Motor neuron (in vitro differentiated cells): ENCODE measurements at regions of chr5 and their contacts with region 1.

Region 1: GRCh38 chr5:174418928-174419796 is 305.2 kb upstream of the MSX2 start:
- ATAC-seq: peak; percentile 99
- H3K4me3 ChIP-seq: peak overlapping the region in 4 of 5 donors; percentile 11 to 18 (median 14)
- H3K27ac ChIP-seq: no peak overlapping the region
- H3K4me1 ChIP-seq: no peaks in the 10 kb centered on the region

Region 2: GRCh38 chr5:174195517-174195916 is 223.6 kb before region 1 on chr5:
- in situ Hi-C with region 1: no loop called
- ATAC-seq: no peak
- H3K4me3 ChIP-seq: no peak overlapping the region
- H3K27ac ChIP-seq: no peak overlapping the region
- H3K4me1 ChIP-seq: peaks cover 17 to 19% of the 10 kb centered on the region in 2 donors

Region 3: GRCh38 chr5:174724491-174725260 is 305.5 kb after region 1 on chr5 and contains the start of gene MSX2:
- in situ Hi-C with region 1: loop called in 3 of 9 experiments (anchors 25 kb)
- ATAC-seq: peak; percentile 89 to 94 (median 93)
- H3K4me3 ChIP-seq: peak within 1 kb of the TSS; percentile 25 to 49 (median 32)
- H3K27ac ChIP-seq: no peak within 1 kb of the TSS
- H3K4me1 ChIP-seq: peaks cover 3 to 5% of the 10 kb centered on the region in 2 donors
- total RNA-seq, gene MSX2: 0.11 to 5.1 (median 0.25) TPM in 7 of 8 experiments, not detected in the other

Region 4: DNA sequence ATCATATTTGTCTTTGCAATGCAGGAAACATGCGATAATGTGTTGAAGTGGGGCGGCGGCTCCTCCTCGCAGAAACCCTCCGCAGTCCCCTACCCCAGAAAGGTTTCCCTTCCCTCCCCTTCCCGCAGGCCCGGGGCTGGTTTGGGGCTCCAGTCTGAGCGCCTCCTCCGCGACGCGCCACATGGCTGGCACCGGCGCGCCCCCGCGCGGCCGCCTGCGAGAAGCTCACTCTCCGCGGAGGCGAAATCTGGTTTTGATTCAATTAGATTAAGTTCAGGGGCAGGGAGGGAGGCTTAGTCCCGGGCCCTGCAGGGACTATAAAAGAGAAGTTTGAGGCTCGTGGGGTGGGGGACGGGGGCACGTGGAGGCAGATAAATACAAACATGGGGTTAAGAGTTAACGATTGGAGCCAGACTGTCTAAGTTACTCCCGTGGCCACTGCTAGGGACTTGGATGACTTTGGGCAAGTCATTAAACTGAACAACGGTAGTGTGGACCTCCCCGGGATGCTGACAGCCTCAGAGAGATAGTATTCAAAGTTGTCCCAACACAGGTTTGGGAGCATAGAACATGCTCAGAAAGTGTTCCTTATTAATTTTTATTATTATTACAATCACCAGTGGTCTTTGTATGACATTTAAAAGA is 374.6 kb after region 1 on chr5:
- in situ Hi-C with region 1: loop called in 4 of 9 experiments (anchors 10 to 25 kb)
- ATAC-seq: peak; percentile 70 to 99 (median 82)
- H3K4me3 ChIP-seq: no peak overlapping the region
- H3K27ac ChIP-seq: no peak overlapping the region
- H3K4me1 ChIP-seq: no peaks in the 10 kb centered on the region

Region 5: DNA sequence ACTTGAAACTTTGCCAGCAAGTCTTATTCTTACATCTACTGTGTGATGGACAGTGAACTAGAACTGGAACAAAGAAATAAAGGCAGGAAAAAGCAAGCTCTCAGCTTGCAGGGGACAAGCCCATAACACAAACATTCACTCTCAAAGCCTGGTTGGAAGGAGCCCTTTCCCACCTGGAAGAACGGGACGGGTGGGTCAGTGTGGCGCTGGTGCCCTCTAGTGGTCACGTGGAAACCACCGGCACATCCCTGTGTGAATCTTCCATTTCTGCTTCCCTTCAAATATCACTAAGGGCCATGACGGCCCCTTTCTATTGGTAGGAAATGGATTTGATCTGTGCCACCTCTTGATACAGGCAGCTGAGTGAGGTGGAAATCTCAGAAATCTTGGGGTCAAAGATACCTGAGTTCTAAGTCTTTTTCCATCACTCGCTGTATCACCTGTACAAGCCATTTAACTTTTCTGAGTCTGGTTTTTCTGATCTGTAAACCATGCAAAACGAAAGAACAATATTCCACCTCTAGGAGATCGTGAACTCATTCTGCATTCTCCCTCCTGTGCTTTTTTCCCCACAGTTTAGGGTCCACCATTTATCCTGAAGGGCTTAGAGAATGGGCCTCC is 516.8 kb after region 1 on chr5:
- in situ Hi-C with region 1: loop called in 4 of 9 experiments (anchors 10 to 25 kb)
- ATAC-seq: peak; percentile 71 to 97 (median 80)
- H3K4me3 ChIP-seq: no peak overlapping the region
- H3K27ac ChIP-seq: no peak overlapping the region
- H3K4me1 ChIP-seq: no peaks in the 10 kb centered on the region